Common myeloid progenitor, CD34-positive (primary cell): ENCODE measurements at regions of chr16 and their contacts with region 1.

Region 1: GRCh38 chr16:56281256-56281805 is 90.0 kb downstream of the GNAO1 start:
- DNase-seq: no peak
- H3K4me3 ChIP-seq: no peak overlapping the region
- H3K27ac ChIP-seq: no peak overlapping the region
- H3K4me1 ChIP-seq: peaks cover 0 to 46% (median 31%) of the 10 kb centered on the region in 4 experiments
- H3K27me3 ChIP-seq: no peaks in the 10 kb centered on the region

Region 2: GRCh38 chr16:56237451-56237930 is 43.8 kb before region 1 on chr16:
- CTCF ChIA-PET with region 1: no interaction called
- POLR2A ChIA-PET with region 1: no interaction called
- DNase-seq: no peak
- H3K4me3 ChIP-seq: no peak overlapping the region
- H3K27ac ChIP-seq: no peak overlapping the region
- H3K4me1 ChIP-seq: no peaks in the 10 kb centered on the region
- H3K27me3 ChIP-seq: no peaks in the 10 kb centered on the region

Region 3: GRCh38 chr16:56262148-56262547 is 19.2 kb before region 1 on chr16:
- CTCF ChIA-PET with region 1: interaction called, 12 read pairs
- POLR2A ChIA-PET with region 1: interaction called, 4 read pairs
- DNase-seq: peak; percentile 25 to 89 (median 81)
- H3K4me3 ChIP-seq: peak overlapping the region in 3 of 7 experiments; percentile 18 to 45 (median 32)
- H3K27ac ChIP-seq: no peak overlapping the region
- H3K4me1 ChIP-seq: peaks cover 3 to 32% (median 26%) of the 10 kb centered on the region in 4 experiments
- H3K27me3 ChIP-seq: no peaks in the 10 kb centered on the region